ENCODE measurements at regions of chr12 and their contacts with region 1.

Region 1: GRCh38 chr12:63779498-63780481 is at the start of gene RXYLT1:
- DNase-seq: peak; percentile 76 to 88
- H3K4me3 ChIP-seq: peak within 1 kb of the TSS; percentile 64
- H3K4me1 ChIP-seq: peaks cover 10% of the 10 kb centered on the region
- H3K27me3 ChIP-seq: no peaks in the 10 kb centered on the region

Region 2: GRCh38 chr12:63668028-63668799 is 111.6 kb before region 1 on chr12 and contains the start of gene DPY19L2:
- in situ Hi-C with region 1: loop called (anchors 25 kb)
- DNase-seq: peak; percentile 43 to 88
- H3K4me3 ChIP-seq: peak within 1 kb of the TSS; percentile 51
- H3K4me1 ChIP-seq: peaks cover 14% of the 10 kb centered on the region
- H3K27me3 ChIP-seq: no peaks in the 10 kb centered on the region

Region 3: GRCh38 chr12:63814146-63814772 is 34.5 kb after region 1 on chr12:
- in situ Hi-C with region 1: no loop called
- DNase-seq: no peak
- H3K4me3 ChIP-seq: no peak overlapping the region
- H3K4me1 ChIP-seq: no peaks in the 10 kb centered on the region
- H3K27me3 ChIP-seq: no peaks in the 10 kb centered on the region

Region 4: DNA sequence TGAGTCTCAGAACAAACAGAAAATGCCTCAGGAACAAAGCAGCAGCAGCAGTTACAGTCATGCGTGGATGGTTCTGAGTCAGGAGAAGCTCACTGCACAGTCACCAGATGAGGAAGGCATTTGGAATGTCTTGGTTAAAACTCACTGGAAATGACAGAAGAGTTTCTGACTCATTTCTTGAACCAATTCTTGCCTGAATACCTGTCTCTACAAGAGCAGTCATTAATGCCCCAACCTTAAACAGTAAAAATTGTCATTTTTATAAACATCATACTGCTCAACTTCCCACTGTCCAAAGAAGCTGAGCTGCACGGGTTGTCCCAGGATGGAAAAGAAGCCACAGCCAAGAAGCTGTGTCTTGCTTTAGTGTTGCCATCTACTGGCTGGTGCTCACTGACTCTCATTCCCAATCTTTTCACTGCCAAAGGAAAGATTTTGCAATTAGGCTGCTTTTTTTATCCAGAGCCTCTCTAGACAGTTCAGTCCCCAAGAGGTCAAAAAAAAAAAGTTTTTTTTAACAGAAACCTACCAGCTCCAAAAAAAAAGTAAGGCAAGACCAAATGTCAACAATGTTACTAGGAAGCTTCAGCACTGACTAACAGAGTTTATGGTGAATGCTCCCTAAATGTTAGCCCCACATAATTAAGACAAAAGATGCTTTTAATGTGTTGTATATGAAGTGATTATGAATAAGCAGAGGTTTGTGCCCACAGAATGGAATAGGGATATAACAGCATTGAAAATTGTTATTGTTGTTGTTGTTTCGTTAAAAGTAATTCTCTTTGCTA is 401.9 kb after region 1 on chr12:
- in situ Hi-C with region 1: no loop called
- DNase-seq: peak; percentile 48 to 55
- H3K4me3 ChIP-seq: no peak overlapping the region
- H3K4me1 ChIP-seq: no peaks in the 10 kb centered on the region
- H3K27me3 ChIP-seq: no peaks in the 10 kb centered on the region